OCI-LY7 (cell line): ENCODE measurements at regions of chr2 and their contacts with region 1.

Region 1: DNA sequence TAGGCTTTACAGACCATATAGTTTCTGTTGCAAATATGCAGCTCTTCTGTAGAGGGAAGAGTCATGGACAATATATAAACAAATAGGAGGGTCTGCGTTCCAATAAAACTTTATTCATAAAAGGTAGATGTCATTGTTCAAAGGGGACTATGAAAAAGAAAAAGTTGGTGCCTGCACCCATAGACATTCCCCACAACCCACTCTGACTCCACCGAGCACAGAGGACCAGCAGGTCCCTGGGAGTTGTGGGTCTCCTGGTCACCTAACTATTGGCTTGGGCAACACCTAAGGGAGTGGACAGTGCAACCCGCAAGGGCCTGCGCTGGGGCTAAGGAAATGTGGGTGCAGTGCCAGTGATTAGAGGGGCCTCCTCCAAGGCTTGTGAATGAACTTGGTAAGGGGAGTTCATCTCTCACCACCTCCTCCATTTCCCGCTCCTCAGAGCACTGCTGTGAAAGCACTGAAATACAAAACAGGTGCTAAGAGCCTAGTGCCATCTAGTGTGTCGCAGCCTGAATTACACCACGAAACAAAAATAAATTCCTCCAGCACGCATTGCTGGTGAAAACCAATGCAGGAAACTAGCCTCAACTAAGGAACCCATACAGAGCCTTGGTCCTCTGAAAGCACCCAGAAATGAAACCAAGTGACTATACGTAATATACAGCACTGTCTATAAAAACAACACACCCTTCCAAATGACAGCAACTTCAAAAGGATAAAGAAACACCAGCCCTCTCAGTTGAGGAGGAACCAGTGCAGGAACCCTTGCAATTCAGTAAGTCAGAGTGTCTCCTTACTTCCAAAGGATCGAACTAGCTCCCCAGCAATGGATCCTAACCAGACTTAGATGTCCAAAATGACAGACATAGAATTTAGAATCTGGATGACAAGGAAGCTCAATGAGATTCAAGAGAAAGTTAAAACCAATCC is 166.6 kb downstream of the RNF144A start:
- DNase-seq: peak; percentile 84
- H3K4me3 ChIP-seq: no peak overlapping the region
- H3K27ac ChIP-seq: no peak overlapping the region
- H3K4me1 ChIP-seq: peaks cover 4% of the 10 kb centered on the region
- CTCF ChIP-seq: peak; percentile 90

Region 2: DNA sequence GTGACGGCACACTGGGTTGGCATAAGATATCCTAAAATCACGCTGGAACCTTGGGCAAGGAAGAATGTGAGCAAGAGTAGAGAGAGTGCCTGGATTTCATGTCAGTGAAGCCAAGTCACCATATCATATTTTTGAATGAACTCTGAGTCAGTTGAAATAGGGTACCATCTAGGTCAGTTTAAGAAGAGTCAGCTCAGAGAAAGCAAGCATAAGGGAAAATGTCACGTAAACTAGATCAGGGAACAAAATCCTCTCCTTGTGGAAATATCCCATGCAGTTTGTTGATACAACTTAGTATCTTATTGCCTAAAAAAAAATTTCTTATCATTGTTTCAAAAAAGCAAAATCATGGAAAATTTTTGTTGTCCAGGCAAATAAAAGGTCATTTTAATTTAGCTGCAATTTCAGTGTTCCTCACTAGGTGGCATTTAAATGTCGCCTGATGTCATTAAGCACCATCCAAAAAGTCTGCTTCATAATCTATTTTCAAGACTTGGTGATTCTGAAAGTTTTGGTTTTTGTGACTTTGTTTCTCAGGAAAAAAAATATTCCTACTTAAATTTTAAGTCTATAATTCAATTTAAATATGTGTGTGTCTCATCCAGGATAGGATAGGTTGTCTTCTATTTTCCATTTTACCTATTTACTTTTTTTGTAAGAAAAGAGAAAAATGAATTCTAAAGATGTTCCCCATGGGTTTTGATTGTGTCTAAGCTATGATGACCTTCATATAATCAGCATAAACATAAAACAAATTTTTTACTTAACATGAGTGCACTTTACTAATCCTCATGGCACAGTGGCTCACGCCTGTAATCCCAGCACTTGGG is 186.7 kb before region 1 on chr2:
- CTCF ChIA-PET with region 1: no interaction called
- POLR2A ChIA-PET with region 1: no interaction called
- intact Hi-C with region 1: loop called (anchors 2 kb)
- DNase-seq: peak; percentile 42
- H3K4me3 ChIP-seq: no peak overlapping the region
- H3K27ac ChIP-seq: no peak overlapping the region
- H3K4me1 ChIP-seq: no peaks in the 10 kb centered on the region
- CTCF ChIP-seq: peak; percentile 90

Region 3: GRCh38 chr2:6917071-6917760 is 166.6 kb before region 1 on chr2 and contains the start of gene RNF144A:
- CTCF ChIA-PET with region 1: no interaction called
- POLR2A ChIA-PET with region 1: no interaction called
- intact Hi-C with region 1: loop called (anchors 1 kb)
- DNase-seq: peak; percentile 59
- H3K4me3 ChIP-seq: peak within 1 kb of the TSS; percentile 65
- H3K27ac ChIP-seq: no peak within 1 kb of the TSS
- H3K4me1 ChIP-seq: peaks cover 2% of the 10 kb centered on the region
- CTCF ChIP-seq: peak; percentile 56
- total RNA-seq, gene RNF144A: 1.9 and 2.1 TPM in 2 replicates

Region 4: GRCh38 chr2:7037340-7038333 is 46.2 kb before region 1 on chr2:
- CTCF ChIA-PET with region 1: no interaction called
- POLR2A ChIA-PET with region 1: interaction called, 5 read pairs
- intact Hi-C with region 1: loop called (anchors 1 kb)
- DNase-seq: peak; percentile 79
- H3K4me3 ChIP-seq: no peak overlapping the region
- H3K27ac ChIP-seq: no peak overlapping the region
- H3K4me1 ChIP-seq: no peaks in the 10 kb centered on the region
- CTCF ChIP-seq: peak; percentile 94

Region 5: GRCh38 chr2:7057865-7058400 is 25.9 kb before region 1 on chr2:
- CTCF ChIA-PET with region 1: no interaction called
- POLR2A ChIA-PET with region 1: interaction called, 4 read pairs
- intact Hi-C with region 1: loop called (anchors 2 kb)
- DNase-seq: peak; percentile 74
- H3K4me3 ChIP-seq: peak overlapping the region; percentile 57
- H3K27ac ChIP-seq: peak overlapping the region; percentile 94
- H3K4me1 ChIP-seq: peaks cover 84% of the 10 kb centered on the region
- CTCF ChIP-seq: no peak